B cell (primary cell): ENCODE measurements at regions of chr3 and their contacts with region 1.

Region 1: GRCh38 chr3:50337191-50337841 is 3.3 kb downstream of the RASSF1 start:
- DNase-seq: peak; percentile 97
- ATAC-seq: peak; percentile 84
- H3K4me3 ChIP-seq: peak overlapping the region; percentile 39 to 86 (median 68)
- H3K4me3 Mint-ChIP-seq: peak overlapping the region; percentile 96
- H3K27ac ChIP-seq: peak overlapping the region; percentile 97 to 98
- H3K27ac Mint-ChIP-seq: peak overlapping the region; percentile 99
- H3K4me1 ChIP-seq: peaks cover 37 to 74% of the 10 kb centered on the region in 2 donors
- H3K4me1 Mint-ChIP-seq: peaks cover 55% of the 10 kb centered on the region
- H3K27me3 ChIP-seq: no peaks in the 10 kb centered on the region
- H3K27me3 Mint-ChIP-seq: no peaks in the 10 kb centered on the region
- CTCF ChIP-seq: no peak

Region 2: GRCh38 chr3:50292159-50293078 is 44.9 kb before region 1 on chr3 and contains the start of gene IFRD2:
- CTCF ChIA-PET with region 1: interaction called, 4 read pairs
- POLR2A ChIA-PET with region 1: interaction called, 15 read pairs
- intact Hi-C with region 1: no loop called
- DNase-seq: peak; percentile 97
- ATAC-seq: peak; percentile 99
- H3K4me3 ChIP-seq: peak within 1 kb of the TSS; percentile 56 to 94 (median 81)
- H3K4me3 Mint-ChIP-seq: peak within 1 kb of the TSS; percentile 92
- H3K27ac ChIP-seq: peak within 1 kb of the TSS; percentile 57 to 85
- H3K27ac Mint-ChIP-seq: peak within 1 kb of the TSS; percentile 96
- H3K4me1 ChIP-seq: peaks cover 11 to 17% of the 10 kb centered on the region in 2 donors
- H3K4me1 Mint-ChIP-seq: peaks cover 17% of the 10 kb centered on the region
- H3K27me3 ChIP-seq: no peaks in the 10 kb centered on the region
- H3K27me3 Mint-ChIP-seq: no peaks in the 10 kb centered on the region
- CTCF ChIP-seq: no peak
- total RNA-seq, gene IFRD2: 55.8 and 63.4 TPM in 2 replicates

Region 3: GRCh38 chr3:50298836-50299637 is 38.3 kb before region 1 on chr3 and contains the starts of genes HYAL3 and NAA80:
- CTCF ChIA-PET with region 1: interaction called, 7 read pairs
- POLR2A ChIA-PET with region 1: interaction called, 27 read pairs
- intact Hi-C with region 1: loop called (anchors 1 kb)
- DNase-seq: peak; percentile 100
- ATAC-seq: peak; percentile 91
- H3K4me3 ChIP-seq: peak within 1 kb of the TSS; percentile 68 to 89 (median 88)
- H3K4me3 Mint-ChIP-seq: peak within 1 kb of the TSS; percentile 100
- H3K27ac ChIP-seq: peak within 1 kb of the TSS; percentile 77 to 84
- H3K27ac Mint-ChIP-seq: peak within 1 kb of the TSS; percentile 100
- H3K4me1 ChIP-seq: peaks cover 18 to 24% of the 10 kb centered on the region in 2 donors
- H3K4me1 Mint-ChIP-seq: peaks cover 33% of the 10 kb centered on the region
- H3K27me3 ChIP-seq: no peaks in the 10 kb centered on the region
- H3K27me3 Mint-ChIP-seq: no peaks in the 10 kb centered on the region
- CTCF ChIP-seq: peak; percentile 65
- total RNA-seq, gene HYAL3: 1.9 and 3.7 TPM in 2 replicates
- total RNA-seq, gene NAA80: 33.8 and 37.8 TPM in 2 replicates

Region 4: DNA sequence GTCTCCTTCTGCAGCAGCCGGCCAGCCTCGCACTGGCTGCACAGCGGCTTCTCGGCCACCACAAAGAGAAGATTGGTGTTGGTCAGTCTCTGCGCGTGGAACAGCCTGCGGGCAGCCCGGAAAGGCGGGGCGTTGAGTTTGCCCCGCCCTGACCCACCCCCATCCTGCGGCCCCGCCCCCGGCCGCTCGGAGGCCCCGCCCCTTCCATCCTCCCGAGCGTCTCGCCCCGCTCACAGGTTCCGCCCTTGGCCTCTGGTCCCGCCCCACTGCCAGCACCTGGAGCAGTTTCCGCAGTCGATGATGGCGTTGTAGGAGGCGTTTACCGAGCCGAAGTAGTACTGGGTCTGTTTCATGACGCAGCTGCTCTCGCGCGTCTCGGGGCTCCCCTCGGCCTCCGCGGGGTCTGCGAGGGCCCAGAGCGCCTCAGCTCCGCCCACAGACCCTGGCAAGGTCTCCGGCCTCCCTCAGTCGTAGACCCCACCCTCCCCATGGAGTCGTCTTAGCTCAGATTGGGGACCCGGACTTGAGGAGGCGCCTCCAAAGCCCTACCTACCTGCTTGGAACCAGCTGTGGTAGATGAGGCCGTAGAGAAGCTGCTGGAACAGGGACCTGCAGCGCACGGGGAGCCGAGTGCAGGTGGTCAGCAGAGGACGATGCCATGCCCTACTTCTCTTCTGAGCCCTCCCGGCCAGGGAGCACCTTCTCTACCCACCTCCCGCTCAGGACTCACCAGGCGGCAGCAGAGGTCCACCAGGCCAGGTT is 27.9 kb after region 1 on chr3:
- CTCF ChIA-PET with region 1: interaction called, 3 read pairs
- POLR2A ChIA-PET with region 1: interaction called, 6 read pairs
- intact Hi-C with region 1: loop called (anchors 1 kb)
- DNase-seq: peak; percentile 95
- ATAC-seq: peak; percentile 97
- H3K4me3 ChIP-seq: peak overlapping the region; percentile 24 to 84 (median 81)
- H3K4me3 Mint-ChIP-seq: peak overlapping the region; percentile 91
- H3K27ac ChIP-seq: peak overlapping the region; percentile 78 to 86
- H3K27ac Mint-ChIP-seq: peak overlapping the region; percentile 94
- H3K4me1 ChIP-seq: peaks cover 13 to 22% of the 10 kb centered on the region in 2 donors
- H3K4me1 Mint-ChIP-seq: peaks cover 21% of the 10 kb centered on the region
- H3K27me3 ChIP-seq: peaks cover 0 to 3% (median 0%) of the 10 kb centered on the region in 4 experiments
- H3K27me3 Mint-ChIP-seq: peaks cover 4% of the 10 kb centered on the region
- CTCF ChIP-seq: no peak